Cardiac septum (tissue), 1 donor: ENCODE measurements at regions of chr19 and their contacts with region 1.

Region 1: DNA sequence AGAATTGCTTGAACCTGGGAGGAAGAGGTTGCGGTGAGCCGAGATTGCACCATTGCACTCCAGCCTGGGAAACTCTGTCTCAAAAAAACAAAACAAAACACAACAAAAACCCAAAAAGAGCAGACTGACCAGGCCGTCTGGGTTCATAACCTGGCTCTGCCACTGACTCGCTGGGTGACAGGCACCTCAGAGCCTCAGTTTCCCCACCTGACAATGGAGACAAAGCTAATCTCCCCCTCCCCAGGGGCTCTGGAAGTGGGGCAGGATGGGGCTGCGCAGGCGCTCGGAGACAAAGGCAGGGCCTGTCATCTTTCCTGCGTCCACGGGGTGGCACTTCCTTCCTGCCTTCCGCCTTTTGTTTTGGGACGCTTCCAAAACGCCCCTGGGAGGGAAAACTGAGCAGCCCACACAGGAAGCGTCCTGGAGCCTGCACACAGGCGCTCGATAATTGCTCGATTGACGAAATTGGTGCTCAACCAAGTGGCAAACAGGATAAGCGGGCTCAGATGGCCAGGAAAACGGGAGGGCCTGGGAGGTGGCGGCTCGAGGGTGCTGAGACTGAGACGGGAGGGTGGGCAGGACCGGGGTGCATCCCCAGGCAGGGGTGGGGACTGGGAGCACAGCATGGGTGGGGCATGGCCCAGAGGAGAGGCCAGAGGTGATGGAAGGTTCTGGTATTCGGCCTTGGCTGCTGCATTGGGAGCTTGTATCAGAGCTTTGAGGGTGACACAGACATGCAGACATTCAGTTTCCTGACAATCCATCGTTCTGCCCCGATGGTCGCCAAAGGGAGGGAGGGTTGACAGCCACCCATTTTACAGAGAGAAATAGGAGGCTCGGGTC is 17.8 kb downstream of the SPC24 start:
- DNase-seq: peak; percentile 90

Region 2: DNA sequence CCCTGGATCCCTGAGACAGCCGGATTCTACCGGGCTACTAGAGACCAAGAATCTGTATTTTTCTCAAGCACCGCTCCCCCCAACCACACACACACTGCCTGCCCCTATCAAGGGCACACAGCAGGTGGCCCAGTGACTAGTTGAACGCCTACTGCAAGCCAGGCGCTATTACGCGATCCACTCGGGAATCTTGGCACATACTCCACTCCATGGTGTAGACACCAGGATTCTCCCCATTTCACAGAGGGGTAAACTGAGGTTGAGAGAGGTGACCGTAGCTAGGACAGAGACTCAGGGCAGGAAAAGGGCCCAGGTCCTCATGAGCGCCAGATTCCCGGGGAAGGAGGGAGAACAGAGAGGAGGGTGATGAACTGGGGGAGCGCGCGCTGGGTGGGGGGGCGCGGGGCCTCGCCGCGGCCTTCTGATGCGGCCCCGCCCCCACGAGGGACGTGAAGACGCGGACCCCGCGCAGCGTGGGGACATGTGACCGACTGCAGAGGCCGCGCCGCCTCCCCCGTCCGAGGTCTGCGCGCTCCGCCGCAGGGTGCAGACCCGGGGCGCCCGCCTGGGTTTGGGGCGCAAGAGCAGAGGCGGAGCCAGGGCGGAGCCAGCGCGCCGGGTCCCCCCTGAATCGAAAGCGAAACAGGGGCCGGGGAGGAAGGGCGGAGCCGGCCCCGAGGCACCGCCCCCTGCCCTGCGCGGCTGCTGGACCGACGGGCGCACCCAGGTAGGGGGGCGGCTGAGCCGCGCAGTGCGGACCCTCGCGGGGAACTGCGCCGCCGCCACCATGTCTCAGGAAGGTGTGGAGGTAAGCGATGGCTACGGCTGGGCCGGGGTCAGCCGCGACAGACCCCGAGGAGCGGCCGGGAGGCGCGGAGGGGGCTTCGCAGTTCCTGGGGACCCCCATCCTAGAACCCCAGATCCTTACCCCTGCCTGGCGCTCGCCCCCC is 1051.8 kb before region 1 on chr19 and contains the start of gene SHFL:
- intact Hi-C with region 1: no loop called
- DNase-seq: peak; percentile 94
- total RNA-seq, gene SHFL: 9.4 TPM

Region 3: DNA sequence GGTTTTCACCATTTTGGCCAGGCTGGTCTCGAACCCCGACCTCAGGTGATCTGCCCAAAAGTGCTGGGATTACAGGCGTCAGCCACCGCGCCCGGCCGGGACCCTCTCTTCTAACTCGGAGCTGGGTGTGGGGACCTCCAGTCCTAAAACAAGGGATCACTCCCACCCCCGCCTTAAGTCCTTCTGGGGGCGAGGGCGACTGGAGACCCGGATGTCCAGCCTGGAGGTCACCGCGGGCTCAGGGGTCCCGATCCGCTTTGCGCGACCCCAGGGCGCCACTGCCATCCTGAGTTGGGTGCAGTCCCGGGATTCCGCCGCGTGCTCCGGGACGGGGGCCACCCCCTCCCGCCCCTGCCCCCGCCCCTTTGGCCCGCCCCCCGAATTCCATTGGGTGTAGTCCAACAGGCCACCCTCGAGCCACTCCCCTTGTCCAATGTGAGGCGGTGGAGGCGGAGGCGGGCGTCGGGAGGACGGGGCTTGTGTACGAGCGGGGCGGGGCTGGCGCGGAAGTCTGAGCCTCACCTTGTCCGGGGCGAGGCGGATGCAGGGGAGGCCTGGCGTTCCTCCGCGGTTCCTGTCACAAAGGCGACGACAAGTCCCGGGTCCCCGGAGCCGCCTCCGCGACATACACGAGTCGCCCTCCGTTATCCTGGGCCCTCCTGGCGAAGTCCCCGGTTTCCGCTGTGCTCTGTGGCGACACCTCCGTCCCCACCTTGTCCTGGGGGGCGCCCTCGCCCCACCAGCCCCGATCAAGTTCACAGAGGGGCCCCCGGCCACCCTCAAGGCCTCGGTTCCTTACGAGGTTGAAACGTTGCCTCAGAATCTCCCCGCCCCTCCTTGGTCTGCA is 47.5 kb before region 1 on chr19:
- intact Hi-C with region 1: loop called (anchors 5 kb)
- DNase-seq: peak; percentile 99

Region 4: DNA sequence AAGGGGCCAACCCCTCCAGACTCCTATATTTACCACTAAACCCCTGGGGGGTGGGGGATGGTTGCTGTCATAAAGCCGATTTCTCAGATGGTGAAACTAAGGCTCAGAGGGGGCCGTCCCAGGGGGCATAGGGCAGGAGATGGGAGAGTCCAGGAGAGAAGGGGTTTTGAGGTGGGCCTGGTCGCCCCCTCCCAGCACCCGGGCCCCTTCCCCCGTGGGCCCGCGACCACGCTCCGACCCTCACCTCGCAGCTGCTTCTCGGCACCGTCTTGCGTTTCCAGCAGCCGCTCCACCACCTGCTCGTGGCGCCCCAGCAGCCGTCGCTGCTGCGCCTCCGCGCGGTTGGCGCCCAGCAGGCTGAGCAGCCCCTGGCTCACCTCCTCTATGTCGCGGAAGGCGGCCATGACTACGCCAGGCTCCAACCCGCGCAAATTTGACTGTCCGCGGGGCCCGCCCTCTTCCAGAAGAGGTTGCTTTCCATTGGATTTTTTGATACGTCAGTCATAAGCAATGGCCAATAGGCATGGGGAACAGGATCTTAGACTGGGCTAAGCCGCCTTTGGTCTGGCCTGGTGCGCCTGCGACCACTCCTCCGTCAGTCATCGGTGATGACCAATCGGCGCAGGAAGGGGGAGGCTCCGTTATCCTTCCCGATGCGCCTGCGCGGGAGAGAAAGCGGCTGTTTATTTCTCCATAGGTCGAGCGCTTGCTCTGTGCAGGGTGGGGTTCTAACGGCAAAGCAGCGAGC is 17.8 kb after region 1 on chr19 and contains the start of gene SPC24:
- intact Hi-C with region 1: loop called (anchors 2 kb)
- DNase-seq: peak; percentile 98
- total RNA-seq, gene SPC24: 3.8 TPM

Region 5: DNA sequence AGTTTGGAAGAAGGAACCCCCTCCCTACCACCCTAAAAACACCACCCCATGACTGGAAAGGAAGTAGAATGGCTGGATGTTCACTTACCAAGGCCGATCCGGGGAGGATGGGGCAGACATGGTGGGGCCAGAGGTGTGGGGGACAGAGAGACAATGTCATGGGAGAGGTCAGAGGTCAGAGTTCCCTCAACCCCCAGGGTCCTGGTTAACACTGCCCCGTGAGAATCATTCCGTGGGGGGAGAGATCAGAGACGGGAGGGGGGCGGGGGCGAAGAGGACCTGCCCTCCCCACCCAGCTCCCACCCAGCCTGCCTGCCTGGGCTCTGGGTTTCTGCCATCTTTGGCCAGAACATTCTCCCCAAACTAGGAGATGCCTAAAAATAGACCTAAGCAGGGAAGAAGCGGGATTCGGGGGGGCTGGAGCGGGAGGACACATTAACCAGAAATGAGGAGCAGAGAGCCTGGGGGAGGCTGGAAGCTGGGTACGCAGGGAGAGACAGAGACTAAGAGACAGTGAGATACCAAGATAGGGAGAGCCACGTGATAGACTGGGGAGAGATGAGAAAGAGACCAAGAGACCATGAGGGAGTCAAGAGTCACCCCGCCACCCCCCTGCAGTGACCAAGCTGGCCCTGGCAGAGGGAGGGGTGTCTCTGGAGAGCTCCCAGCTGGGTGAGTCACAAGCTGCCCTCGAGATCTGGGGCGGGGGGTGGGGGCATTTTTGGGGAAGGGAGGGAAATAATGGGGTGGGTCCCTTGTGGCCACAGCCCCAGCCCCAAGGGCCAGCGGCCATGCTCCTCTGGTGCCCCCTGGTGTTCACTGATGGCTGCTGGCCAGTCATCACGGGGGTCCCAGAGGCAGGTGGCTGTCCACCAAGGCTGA is 65.7 kb after region 1 on chr19:
- intact Hi-C with region 1: loop called (anchors 1 kb)
- DNase-seq: peak; percentile 86

Region 6: DNA sequence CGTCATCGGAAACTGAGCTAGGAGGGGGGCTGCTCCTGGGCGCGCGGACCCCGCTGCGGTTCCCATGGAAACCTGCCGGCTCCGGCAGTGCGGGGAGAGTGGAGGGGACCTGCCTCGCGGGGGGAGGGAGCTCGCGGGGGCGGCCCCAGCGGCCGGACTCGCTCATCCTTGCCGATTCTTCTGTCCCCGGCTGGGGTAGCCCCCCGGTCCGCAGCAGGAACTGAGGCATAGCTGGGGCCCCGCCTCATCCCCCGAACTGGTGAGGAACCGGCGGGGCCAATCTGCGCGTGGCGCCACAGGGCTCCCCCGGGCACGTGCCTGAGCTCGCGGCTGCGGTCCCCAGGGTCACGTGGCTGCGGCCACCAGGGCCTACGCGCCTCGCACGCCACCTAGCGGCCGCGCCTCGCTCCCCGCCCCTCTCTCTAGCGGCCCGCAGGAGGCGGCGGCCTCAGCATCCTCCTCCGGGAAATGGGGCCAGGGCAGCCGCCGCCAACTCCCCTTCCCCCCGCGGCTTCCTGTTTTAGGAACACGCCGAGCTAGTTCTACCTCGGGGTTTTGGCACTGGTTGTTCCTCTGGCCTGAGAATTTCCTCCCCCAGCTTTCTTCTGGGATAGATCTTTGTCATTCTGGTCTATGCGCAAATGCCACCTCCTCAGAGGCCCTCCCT is 344.8 kb after region 1 on chr19:
- intact Hi-C with region 1: loop called (anchors 2 kb)
- DNase-seq: peak; percentile 89